ENCODE measurements at regions of chr5 and their contacts with region 1.

Region 1: GRCh38 chr5:54867310-54867944 is 118.0 kb downstream of the ESM1 start:
- DNase-seq: peak; percentile 70
- H3K4me3 ChIP-seq: no peak overlapping the region
- H3K27ac ChIP-seq: no peak overlapping the region
- H3K4me1 ChIP-seq: no peaks in the 10 kb centered on the region
- H3K27me3 ChIP-seq: peaks cover 0 to 4% of the 10 kb centered on the region in 2 experiments
- CTCF ChIP-seq: peak; percentile 37 to 40
- POLR2A ChIP-seq: no peak

Region 2: GRCh38 chr5:54243473-54244080 is 623.9 kb before region 1 on chr5:
- CTCF ChIA-PET with region 1: interaction called, 41 read pairs
- POLR2A ChIA-PET with region 1: no interaction called
- dilution Hi-C with region 1: no loop called
- intact Hi-C with region 1: loop called (anchors 5 kb)
- DNase-seq: peak; percentile 47
- H3K4me3 ChIP-seq: no peak overlapping the region
- H3K27ac ChIP-seq: no peak overlapping the region
- H3K4me1 ChIP-seq: peaks cover 14% of the 10 kb centered on the region
- H3K27me3 ChIP-seq: peaks cover 0 to 1% of the 10 kb centered on the region in 2 experiments
- CTCF ChIP-seq: peak; percentile 44 to 48
- POLR2A ChIP-seq: no peak

Region 3: GRCh38 chr5:54443270-54443669 is 424.2 kb before region 1 on chr5:
- CTCF ChIA-PET with region 1: interaction called, 94 read pairs
- POLR2A ChIA-PET with region 1: no interaction called
- dilution Hi-C with region 1: no loop called
- intact Hi-C with region 1: loop called (anchors 1 kb)
- DNase-seq: peak; percentile 51
- H3K4me3 ChIP-seq: no peak overlapping the region
- H3K27ac ChIP-seq: no peak overlapping the region
- H3K4me1 ChIP-seq: no peaks in the 10 kb centered on the region
- H3K27me3 ChIP-seq: peaks cover 14 to 15% of the 10 kb centered on the region in 2 experiments
- CTCF ChIP-seq: peak; percentile 43 to 44
- POLR2A ChIP-seq: no peak

Region 4: DNA sequence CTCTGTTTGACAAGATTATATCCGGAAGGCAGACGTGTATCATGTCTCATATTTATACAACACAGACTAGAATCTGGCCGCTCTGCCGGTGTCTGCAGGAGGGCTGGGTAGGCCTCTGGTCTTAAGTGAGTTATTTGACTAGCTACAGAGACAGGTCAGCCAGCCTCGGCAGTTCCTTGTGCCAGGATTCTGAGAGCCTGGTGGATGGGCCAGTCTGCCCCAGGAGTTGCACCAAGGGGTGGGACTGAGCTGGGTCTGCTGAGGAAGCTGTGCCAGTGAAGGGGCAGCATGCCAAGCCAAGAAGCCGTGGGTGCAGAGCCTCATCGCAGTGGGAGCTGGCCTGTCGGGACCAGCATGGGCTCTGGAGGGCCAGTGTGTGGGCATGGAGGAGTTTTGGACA is 342.7 kb before region 1 on chr5:
- CTCF ChIA-PET with region 1: interaction called, 301 read pairs
- POLR2A ChIA-PET with region 1: interaction called, 4 read pairs
- dilution Hi-C with region 1: no loop called
- intact Hi-C with region 1: no loop called
- DNase-seq: peak; percentile 32
- H3K4me3 ChIP-seq: no peak overlapping the region
- H3K27ac ChIP-seq: peak overlapping the region; percentile 8
- H3K4me1 ChIP-seq: peaks cover 58% of the 10 kb centered on the region
- H3K27me3 ChIP-seq: no peaks in the 10 kb centered on the region
- CTCF ChIP-seq: no peak
- POLR2A ChIP-seq: no peak

Region 5: DNA sequence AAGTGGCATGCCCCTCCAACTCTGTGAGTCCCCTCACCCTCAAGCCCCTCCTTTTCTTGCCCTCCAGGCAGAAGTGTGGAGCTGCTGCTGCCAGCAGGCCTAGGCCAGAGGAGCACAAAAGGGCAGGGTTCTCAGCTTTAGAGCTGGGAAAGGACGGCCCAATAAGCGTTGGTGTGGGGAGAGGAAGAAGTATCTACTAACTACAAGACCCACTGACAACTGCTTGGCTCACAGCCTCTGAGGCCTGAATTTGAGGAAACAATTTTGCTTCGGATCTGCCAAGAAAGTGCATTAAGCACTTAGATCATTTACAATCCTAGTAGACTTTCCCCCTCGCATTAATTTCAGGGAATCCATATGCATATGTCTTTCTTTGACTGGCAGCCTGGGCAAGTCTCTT is 170.5 kb before region 1 on chr5:
- CTCF ChIA-PET with region 1: no interaction called
- POLR2A ChIA-PET with region 1: no interaction called
- dilution Hi-C with region 1: no loop called
- intact Hi-C with region 1: no loop called
- DNase-seq: no peak
- H3K4me3 ChIP-seq: no peak overlapping the region
- H3K27ac ChIP-seq: no peak overlapping the region
- H3K4me1 ChIP-seq: peaks cover 3% of the 10 kb centered on the region
- H3K27me3 ChIP-seq: no peaks in the 10 kb centered on the region
- CTCF ChIP-seq: no peak
- POLR2A ChIP-seq: no peak

Region 6: GRCh38 chr5:54736003-54736797 is 131.2 kb before region 1 on chr5:
- CTCF ChIA-PET with region 1: no interaction called
- POLR2A ChIA-PET with region 1: no interaction called
- dilution Hi-C with region 1: no loop called
- intact Hi-C with region 1: no loop called
- DNase-seq: no peak
- H3K4me3 ChIP-seq: no peak overlapping the region
- H3K27ac ChIP-seq: no peak overlapping the region
- H3K4me1 ChIP-seq: peaks cover 5% of the 10 kb centered on the region
- H3K27me3 ChIP-seq: no peaks in the 10 kb centered on the region
- CTCF ChIP-seq: no peak
- POLR2A ChIP-seq: no peak

Region 7: DNA sequence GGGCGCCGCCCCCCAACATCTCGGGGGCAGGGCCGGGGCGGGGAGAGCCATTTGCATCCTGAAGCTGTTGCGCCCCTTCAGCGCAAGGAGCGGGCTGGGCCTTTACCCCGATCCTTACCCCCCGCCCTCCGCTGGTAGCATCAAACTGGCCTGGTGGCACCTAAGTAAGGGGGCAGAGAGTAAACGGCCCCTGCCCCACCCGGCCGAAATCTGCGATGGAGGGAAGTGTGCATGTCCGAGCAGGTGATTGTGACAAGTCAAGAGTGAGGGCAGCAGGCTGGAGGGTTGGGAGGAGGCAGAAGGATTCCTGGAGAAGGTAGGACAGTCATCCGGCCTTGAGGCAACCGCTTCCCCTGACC is 16.8 kb after region 1 on chr5:
- CTCF ChIA-PET with region 1: interaction called, 18 read pairs
- POLR2A ChIA-PET with region 1: no interaction called
- dilution Hi-C with region 1: no loop called
- intact Hi-C with region 1: no loop called
- DNase-seq: no peak
- H3K4me3 ChIP-seq: peak overlapping the region in 1 of 3 experiments; percentile 40
- H3K27ac ChIP-seq: no peak overlapping the region
- H3K4me1 ChIP-seq: peaks cover 2% of the 10 kb centered on the region
- H3K27me3 ChIP-seq: peaks cover 5 to 9% of the 10 kb centered on the region in 2 experiments
- CTCF ChIP-seq: no peak
- POLR2A ChIP-seq: no peak

Region 8: DNA sequence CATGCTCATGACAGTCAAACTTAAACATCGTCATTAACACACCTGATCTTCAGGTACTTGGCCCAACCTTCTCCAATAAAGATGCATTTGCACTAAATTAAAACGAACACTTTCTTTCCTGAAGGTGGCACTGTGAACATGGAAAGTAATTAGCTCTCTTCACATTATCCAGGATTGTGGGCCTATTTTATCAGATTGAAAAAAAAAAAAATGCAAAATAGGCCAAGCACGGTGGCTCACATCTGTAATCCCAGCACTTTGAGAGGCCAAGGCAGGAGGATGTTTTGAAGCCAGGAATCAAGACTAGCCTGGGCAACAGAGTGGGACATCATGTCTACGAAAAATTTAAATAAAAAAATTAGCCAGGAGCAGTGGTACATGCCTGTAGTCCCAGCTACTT is 319.9 kb after region 1 on chr5:
- CTCF ChIA-PET with region 1: no interaction called
- POLR2A ChIA-PET with region 1: no interaction called
- dilution Hi-C with region 1: no loop called
- intact Hi-C with region 1: no loop called
- DNase-seq: peak; percentile 27
- H3K4me3 ChIP-seq: no peak overlapping the region
- H3K27ac ChIP-seq: no peak overlapping the region
- H3K4me1 ChIP-seq: no peaks in the 10 kb centered on the region
- H3K27me3 ChIP-seq: peaks cover 34 to 65% of the 10 kb centered on the region in 2 experiments
- CTCF ChIP-seq: no peak
- POLR2A ChIP-seq: no peak